Colonic mucosa (tissue), 4 donors: ENCODE measurements at regions of chr13 and their contacts with region 1.

Region 1: DNA sequence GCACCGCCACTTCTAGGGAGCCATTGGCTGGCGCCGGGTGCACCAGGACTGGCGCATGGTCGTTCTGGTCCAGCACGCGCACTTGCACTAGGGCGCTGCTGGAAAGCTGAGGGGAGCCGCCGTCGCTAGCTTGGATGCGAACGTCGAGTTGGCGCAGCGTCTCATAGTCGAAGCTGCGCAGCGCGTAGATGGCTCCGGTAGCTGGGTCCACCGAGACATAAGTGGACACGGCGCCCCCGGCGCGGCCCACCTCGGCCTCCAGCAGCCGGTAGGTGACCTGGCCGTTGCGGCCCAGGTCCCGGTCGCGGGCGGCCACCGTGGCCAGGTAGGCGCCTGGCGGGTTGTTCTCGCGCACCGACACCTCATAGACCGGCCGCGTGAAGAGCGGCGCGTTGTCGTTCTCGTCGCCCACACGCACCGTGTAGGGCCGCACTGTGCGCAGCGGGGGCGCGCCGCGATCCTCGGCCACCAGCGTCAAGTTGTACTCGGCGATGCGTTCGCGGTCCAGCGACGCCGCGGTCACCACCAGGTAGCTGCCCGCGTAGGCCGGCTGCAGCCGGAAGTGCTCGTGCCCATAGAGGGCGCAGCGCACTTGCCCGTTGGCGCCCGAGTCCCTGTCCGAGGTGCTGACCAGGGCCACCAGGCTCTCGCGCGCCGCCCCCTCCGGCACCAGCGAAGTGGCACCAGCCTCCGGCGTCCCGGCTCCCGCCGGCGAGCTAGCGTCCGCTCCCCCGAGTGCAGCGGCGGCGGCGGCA is 1.7 kb downstream of the PCDH8 start:
- DNase-seq: peak; percentile 63
- H3K4me3 ChIP-seq: no peak overlapping the region
- H3K27ac ChIP-seq: no peak overlapping the region
- H3K4me1 ChIP-seq: peaks cover 9% of the 10 kb centered on the region
- H3K27me3 ChIP-seq: peaks cover 70% of the 10 kb centered on the region
- CTCF ChIP-seq: no peak

Region 2: DNA sequence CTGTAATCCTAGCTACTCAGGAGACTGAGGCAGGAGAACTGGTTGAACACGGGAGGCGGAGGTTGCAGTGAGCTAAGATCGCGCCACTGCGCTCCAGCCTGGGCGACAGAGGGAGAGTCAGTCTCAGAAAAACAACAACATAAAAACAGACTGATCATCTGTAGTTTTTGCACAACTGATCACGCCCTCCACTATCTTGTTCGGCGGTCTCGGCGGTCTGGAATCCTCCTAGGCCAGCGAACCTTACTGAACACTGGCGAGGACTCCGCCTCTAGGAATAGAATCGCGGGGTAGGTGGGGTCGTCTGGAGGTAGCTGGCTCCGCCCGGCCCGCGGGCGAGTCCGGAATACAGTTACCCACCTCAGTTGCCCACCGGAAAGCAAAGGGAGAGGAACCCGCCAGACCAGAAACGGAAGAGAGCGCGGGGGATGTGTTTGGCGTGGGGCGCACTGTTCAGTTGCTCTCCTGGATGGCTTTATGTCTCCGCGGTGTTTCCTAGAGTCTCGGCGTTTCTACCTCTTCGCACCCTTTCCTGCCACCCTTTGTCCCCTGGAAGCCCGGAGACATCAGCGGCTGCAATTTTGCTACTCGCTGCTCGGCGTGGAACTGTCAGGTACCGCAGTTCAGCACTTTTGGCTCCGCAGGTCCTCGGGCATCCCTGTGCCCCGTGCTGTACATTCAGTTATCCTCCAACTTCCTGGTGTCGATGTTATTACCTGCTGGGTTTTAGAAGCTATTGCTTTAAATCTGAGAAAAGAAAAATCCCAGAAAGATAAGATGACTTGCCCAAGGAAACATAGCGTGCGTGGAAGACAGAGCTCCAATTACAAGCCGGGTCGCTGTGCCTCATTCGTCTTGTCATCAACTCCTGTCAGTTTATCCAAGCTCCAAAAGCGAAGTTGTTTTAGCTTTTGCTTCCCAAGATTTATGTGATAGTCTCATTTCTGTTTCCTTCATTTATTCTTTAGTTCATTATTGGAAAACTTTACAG is 229.4 kb before region 1 on chr13:
- intact Hi-C with region 1: loop called (anchors 10 kb)
- DNase-seq: peak; percentile 78
- H3K4me3 ChIP-seq: peak overlapping the region; percentile 71
- H3K27ac ChIP-seq: peak overlapping the region; percentile 62
- H3K4me1 ChIP-seq: no peaks in the 10 kb centered on the region
- H3K27me3 ChIP-seq: no peaks in the 10 kb centered on the region
- CTCF ChIP-seq: no peak

Region 3: GRCh38 chr13:52961196-52961910 is 114.6 kb after region 1 on chr13:
- intact Hi-C with region 1: no loop called
- DNase-seq: no peak
- H3K4me3 ChIP-seq: no peak overlapping the region
- H3K27ac ChIP-seq: no peak overlapping the region
- H3K4me1 ChIP-seq: no peaks in the 10 kb centered on the region
- H3K27me3 ChIP-seq: no peaks in the 10 kb centered on the region
- CTCF ChIP-seq: no peak